Mammary epithelial cell (primary cell): ENCODE measurements at regions of chr2 and their contacts with region 1.

Region 1: GRCh38 chr2:203683932-203684556 is 22.4 kb upstream of the CD28 start:
- DNase-seq: peak; percentile 99
- H3K4me3 ChIP-seq: no peak overlapping the region
- H3K27ac ChIP-seq: peak overlapping the region; percentile 97
- H3K4me1 ChIP-seq: peaks cover 72% of the 10 kb centered on the region
- H3K27me3 ChIP-seq: no peaks in the 10 kb centered on the region
- CTCF ChIP-seq: no peak

Region 2: DNA sequence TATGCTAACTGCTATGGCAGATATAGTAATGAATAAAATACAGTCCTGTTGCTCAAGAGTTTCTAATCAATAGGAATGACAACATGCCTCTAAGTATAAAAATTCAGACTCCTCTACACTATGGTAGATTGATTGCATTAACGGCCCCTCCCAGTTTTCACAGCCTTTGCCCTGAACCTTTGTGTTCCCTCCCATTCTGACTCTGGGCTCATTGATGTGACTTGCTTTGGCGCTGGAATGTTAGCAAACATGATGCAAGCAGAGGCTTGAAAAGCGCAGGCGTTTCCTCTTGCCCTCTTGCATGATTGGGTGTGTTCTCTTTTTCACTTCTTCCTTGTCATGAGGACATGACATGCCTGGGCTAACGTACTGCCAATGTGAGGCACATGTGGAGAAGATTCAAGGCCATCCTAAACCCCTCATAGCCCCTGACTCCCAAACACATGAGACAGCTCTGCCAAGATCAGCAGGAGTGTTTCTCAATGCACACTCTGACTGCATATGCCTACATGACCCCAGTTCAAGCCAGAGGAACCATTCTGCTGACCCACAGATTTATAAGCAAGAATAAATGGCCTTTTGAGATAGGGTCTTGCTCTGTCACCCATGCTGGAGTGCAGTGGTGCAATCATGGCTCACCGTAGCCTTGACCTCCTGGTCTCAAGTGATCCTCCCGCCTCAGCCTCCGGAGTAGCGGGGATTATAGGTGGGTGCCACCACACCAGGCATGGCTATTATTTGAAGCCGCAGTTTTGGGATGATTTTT is 27.3 kb before region 1 on chr2:
- CTCF ChIA-PET with region 1: no interaction called
- dilution Hi-C with region 1: no loop called
- in situ Hi-C with region 1: no loop called
- intact Hi-C with region 1: loop called (anchors 2 kb)
- DNase-seq: peak; percentile 90
- H3K4me3 ChIP-seq: no peak overlapping the region
- H3K27ac ChIP-seq: peak overlapping the region; percentile 60
- H3K4me1 ChIP-seq: peaks cover 22% of the 10 kb centered on the region
- H3K27me3 ChIP-seq: no peaks in the 10 kb centered on the region
- CTCF ChIP-seq: no peak

Region 3: DNA sequence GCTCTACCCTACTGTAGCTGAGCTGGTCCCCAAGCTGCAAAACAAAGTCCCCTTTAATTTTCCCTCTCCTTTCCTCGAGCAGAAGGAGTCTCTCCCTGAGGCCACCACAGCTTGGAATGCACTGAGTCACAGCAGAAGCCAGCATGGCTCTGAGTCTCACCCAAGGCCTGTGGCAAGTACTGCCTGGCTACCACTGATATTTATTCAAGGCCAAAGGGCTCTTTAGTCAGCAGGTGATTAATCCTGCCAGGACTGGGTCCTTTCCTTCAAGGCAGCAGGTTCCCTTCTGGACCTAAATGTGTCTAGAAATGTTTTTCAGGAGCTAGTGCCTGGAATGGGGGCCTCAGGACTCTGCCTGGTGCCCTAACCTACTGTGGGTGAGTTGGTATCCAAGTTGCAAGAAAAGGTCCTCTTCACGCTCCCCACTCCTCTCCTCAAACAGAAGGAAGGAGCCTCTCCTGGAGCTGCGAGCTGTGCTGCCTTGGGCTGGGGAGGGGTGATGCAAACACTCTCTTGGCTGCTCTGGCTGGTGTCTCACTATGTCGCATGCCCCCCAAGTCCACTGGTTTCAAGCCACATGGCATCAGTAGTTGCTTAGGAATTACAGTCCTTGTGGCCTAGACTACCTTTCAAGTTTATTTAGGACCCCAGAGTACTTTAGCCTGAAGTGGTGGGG is 75.8 kb after region 1 on chr2:
- CTCF ChIA-PET with region 1: no interaction called
- dilution Hi-C with region 1: no loop called
- in situ Hi-C with region 1: no loop called
- intact Hi-C with region 1: loop called (anchors 1 kb)
- DNase-seq: peak; percentile 93
- H3K4me3 ChIP-seq: no peak overlapping the region
- H3K27ac ChIP-seq: peak overlapping the region; percentile 67
- H3K4me1 ChIP-seq: peaks cover 25% of the 10 kb centered on the region
- H3K27me3 ChIP-seq: no peaks in the 10 kb centered on the region
- CTCF ChIP-seq: no peak

Region 4: DNA sequence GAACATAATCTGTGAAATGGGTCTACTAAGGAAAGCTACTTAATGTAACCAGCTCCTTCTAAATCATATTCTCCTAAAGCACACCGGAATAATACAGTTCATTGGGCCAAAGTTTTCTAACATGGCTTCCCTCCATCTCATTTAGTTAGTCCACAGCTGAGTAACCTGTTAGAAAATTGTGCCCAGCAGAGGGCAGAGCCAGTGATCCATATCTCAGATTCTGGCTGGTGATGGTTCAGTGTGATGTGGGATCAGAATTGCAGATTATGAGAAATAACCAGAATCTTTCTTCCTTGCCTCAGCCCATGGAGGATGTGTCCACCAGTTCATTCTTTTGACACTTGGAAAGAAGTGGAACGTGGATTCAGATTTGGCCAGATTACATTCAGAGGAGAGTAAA is 174.1 kb after region 1 on chr2:
- CTCF ChIA-PET with region 1: no interaction called
- dilution Hi-C with region 1: no loop called
- in situ Hi-C with region 1: no loop called
- intact Hi-C with region 1: no loop called
- DNase-seq: no peak
- H3K4me3 ChIP-seq: no peak overlapping the region
- H3K27ac ChIP-seq: no peak overlapping the region
- H3K4me1 ChIP-seq: no peaks in the 10 kb centered on the region
- H3K27me3 ChIP-seq: no peaks in the 10 kb centered on the region
- CTCF ChIP-seq: no peak